Activated B cell treated with CpG ODN at 0.5 μM for 24 hours (primary cell): ENCODE measurements at regions of chr4 and their contacts with region 1.

Region 1: GRCh38 chr4:74675673-74676279 is 118.5 kb downstream of the BTC start:
- DNase-seq: no peak
- ATAC-seq: peak; percentile 65
- H3K4me3 Mint-ChIP-seq: no peak overlapping the region
- H3K27ac Mint-ChIP-seq: no peak overlapping the region
- H3K4me1 Mint-ChIP-seq: no peaks in the 10 kb centered on the region
- H3K27me3 Mint-ChIP-seq: peaks cover 9% of the 10 kb centered on the region
- CTCF ChIP-seq: no peak

Region 2: GRCh38 chr4:73917081-73917501 is 758.7 kb before region 1 on chr4:
- CTCF ChIA-PET with region 1: no interaction called
- POLR2A ChIA-PET with region 1: no interaction called
- intact Hi-C with region 1: no loop called
- DNase-seq: no peak
- ATAC-seq: no peak
- H3K4me3 Mint-ChIP-seq: no peak overlapping the region
- H3K27ac Mint-ChIP-seq: no peak overlapping the region
- H3K4me1 Mint-ChIP-seq: no peaks in the 10 kb centered on the region
- H3K27me3 Mint-ChIP-seq: no peaks in the 10 kb centered on the region
- CTCF ChIP-seq: no peak

Region 3: DNA sequence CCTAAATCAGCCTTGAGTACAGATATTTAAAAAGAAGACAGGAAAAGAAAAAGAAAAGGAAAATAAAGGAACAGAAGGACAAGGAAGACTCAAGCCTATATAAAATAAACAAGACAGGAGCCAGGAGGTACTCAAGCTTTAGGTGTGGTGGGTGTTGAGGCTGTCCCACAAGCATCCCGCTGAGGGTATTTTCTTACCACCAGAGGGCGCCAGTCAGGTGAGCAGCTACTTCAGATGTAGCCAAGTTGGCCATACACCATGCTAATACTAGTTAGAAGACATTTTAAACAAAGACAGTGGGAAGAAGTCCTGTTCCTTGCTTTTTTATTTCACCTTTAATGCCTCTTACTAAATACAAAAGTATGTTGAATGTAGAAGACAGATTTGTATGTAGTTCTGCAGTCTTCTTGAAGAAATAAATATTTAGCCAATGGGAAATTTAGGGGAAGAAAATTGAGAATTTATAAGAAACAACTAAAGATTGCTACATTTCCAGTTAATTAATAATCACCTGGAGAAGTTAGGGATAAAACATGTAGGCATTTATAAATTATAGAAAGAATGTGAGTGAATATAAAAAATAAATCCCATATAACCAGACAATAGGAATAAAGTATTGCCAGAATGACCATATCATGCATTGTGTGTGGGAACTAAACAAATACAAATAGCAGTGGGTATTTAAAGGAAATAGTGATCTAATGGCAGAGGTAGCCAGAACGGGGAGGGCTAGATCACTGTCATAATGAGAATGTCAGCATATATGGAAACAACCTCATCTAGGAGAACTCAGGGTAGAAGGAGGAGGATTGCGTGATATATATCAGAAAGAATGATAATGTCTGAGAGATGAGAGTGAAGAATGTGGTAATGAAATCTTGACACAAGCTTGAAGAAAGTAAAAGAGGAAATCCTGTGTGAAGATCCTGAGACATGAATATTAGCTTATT is 446.8 kb before region 1 on chr4:
- CTCF ChIA-PET with region 1: interaction called, 3 read pairs
- POLR2A ChIA-PET with region 1: no interaction called
- intact Hi-C with region 1: loop called (anchors 1 kb)
- DNase-seq: peak; percentile 36
- ATAC-seq: peak; percentile 78
- H3K4me3 Mint-ChIP-seq: no peak overlapping the region
- H3K27ac Mint-ChIP-seq: no peak overlapping the region
- H3K4me1 Mint-ChIP-seq: no peaks in the 10 kb centered on the region
- H3K27me3 Mint-ChIP-seq: no peaks in the 10 kb centered on the region
- CTCF ChIP-seq: peak; percentile 60

Region 4: GRCh38 chr4:74320559-74321118 is 355.1 kb before region 1 on chr4:
- CTCF ChIA-PET with region 1: no interaction called
- POLR2A ChIA-PET with region 1: no interaction called
- intact Hi-C with region 1: loop called (anchors 1 kb)
- DNase-seq: no peak
- ATAC-seq: peak; percentile 28
- H3K4me3 Mint-ChIP-seq: no peak overlapping the region
- H3K27ac Mint-ChIP-seq: no peak overlapping the region
- H3K4me1 Mint-ChIP-seq: no peaks in the 10 kb centered on the region
- H3K27me3 Mint-ChIP-seq: peaks cover 25% of the 10 kb centered on the region
- CTCF ChIP-seq: no peak

Region 5: DNA sequence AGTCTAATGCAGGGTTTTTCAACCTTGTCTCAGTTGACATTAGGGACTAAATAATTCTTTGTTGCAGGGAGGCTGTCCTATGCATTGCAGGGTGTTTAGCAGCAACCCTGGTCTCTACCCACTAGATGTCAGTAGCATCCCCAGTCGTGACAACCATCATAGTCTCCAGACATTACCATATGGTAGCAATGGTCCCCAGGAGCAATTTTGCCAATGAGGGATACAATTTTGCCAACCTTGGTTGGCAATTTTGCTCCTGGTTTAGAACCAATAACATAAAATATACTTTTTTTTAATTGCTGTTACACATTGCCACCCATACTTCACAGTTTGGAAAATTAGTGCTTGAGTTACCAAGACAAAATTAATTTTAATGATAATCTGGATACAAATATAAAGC is 304.9 kb before region 1 on chr4:
- CTCF ChIA-PET with region 1: interaction called, 18 read pairs
- POLR2A ChIA-PET with region 1: no interaction called
- intact Hi-C with region 1: loop called (anchors 1 kb)
- DNase-seq: no peak
- ATAC-seq: peak; percentile 71
- H3K4me3 Mint-ChIP-seq: no peak overlapping the region
- H3K27ac Mint-ChIP-seq: no peak overlapping the region
- H3K4me1 Mint-ChIP-seq: no peaks in the 10 kb centered on the region
- H3K27me3 Mint-ChIP-seq: peaks cover 15% of the 10 kb centered on the region
- CTCF ChIP-seq: no peak

Region 6: GRCh38 chr4:74376888-74377483 is 298.8 kb before region 1 on chr4:
- CTCF ChIA-PET with region 1: interaction called, 18 read pairs
- POLR2A ChIA-PET with region 1: no interaction called
- intact Hi-C with region 1: loop called (anchors 1 kb)
- DNase-seq: no peak
- ATAC-seq: peak; percentile 52
- H3K4me3 Mint-ChIP-seq: no peak overlapping the region
- H3K27ac Mint-ChIP-seq: no peak overlapping the region
- H3K4me1 Mint-ChIP-seq: no peaks in the 10 kb centered on the region
- H3K27me3 Mint-ChIP-seq: peaks cover 2% of the 10 kb centered on the region
- CTCF ChIP-seq: peak; percentile 63

Region 7: DNA sequence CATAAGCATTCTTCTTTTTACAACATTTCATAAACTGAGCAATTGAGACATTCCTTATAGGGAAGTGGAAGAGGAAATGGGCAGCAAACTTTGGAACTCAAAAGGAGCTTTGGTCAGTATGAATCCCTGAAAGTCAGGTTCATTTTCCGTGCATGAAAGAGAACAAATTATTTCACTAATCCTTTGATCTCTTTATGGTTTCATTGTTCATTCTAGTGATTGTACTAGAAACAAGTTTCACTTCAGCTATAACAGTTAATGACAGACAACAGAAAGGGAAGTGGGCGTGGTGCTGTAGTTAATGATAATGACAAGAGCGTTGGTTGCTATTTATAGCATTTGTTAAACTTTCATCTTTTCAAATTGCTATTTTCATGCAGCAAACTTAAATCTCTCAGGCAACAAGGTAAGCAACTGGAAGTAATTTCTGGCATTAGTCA is 132.5 kb before region 1 on chr4:
- CTCF ChIA-PET with region 1: no interaction called
- POLR2A ChIA-PET with region 1: no interaction called
- intact Hi-C with region 1: no loop called
- DNase-seq: no peak
- ATAC-seq: peak; percentile 28
- H3K4me3 Mint-ChIP-seq: peak overlapping the region; percentile 13
- H3K27ac Mint-ChIP-seq: no peak overlapping the region
- H3K4me1 Mint-ChIP-seq: peaks cover 2% of the 10 kb centered on the region
- H3K27me3 Mint-ChIP-seq: no peaks in the 10 kb centered on the region
- CTCF ChIP-seq: no peak

Region 8: GRCh38 chr4:74608151-74608949 is 67.4 kb before region 1 on chr4:
- CTCF ChIA-PET with region 1: no interaction called
- POLR2A ChIA-PET with region 1: no interaction called
- intact Hi-C with region 1: no loop called
- DNase-seq: no peak
- ATAC-seq: no peak
- H3K4me3 Mint-ChIP-seq: no peak overlapping the region
- H3K27ac Mint-ChIP-seq: no peak overlapping the region
- H3K4me1 Mint-ChIP-seq: no peaks in the 10 kb centered on the region
- H3K27me3 Mint-ChIP-seq: no peaks in the 10 kb centered on the region
- CTCF ChIP-seq: no peak